ENCODE measurements at regions of chr16 and their contacts with region 1.

Region 1: GRCh38 chr16:86252596-86252995 is 257.7 kb upstream of the FOXF1 start:
- DNase-seq: no peak
- H3K4me3 ChIP-seq: no peak overlapping the region
- H3K27ac ChIP-seq: no peak overlapping the region
- H3K4me1 ChIP-seq: no peaks in the 10 kb centered on the region
- H3K27me3 ChIP-seq: peaks cover 45% of the 10 kb centered on the region
- CTCF ChIP-seq: peak; percentile 30; the same call in 1 of the 2 replicates

Region 2: GRCh38 chr16:85898521-85899442 is 353.8 kb before region 1 on chr16 and contains the start of gene IRF8:
- CTCF ChIA-PET with region 1: interaction called, 13 read pairs
- POLR2A ChIA-PET with region 1: no interaction called
- intact Hi-C with region 1: no loop called
- DNase-seq: no peak
- H3K4me3 ChIP-seq: no peak within 1 kb of the TSS
- H3K27ac ChIP-seq: no peak within 1 kb of the TSS
- H3K4me1 ChIP-seq: no peaks in the 10 kb centered on the region
- H3K27me3 ChIP-seq: peaks cover 92% of the 10 kb centered on the region
- CTCF ChIP-seq: no peak
- total RNA-seq, gene IRF8: not detected in 2 replicates

Region 3: GRCh38 chr16:86027366-86028126 is 225.1 kb before region 1 on chr16:
- CTCF ChIA-PET with region 1: interaction called, 11 read pairs
- POLR2A ChIA-PET with region 1: no interaction called
- intact Hi-C with region 1: no loop called
- DNase-seq: no peak
- H3K4me3 ChIP-seq: no peak overlapping the region
- H3K27ac ChIP-seq: no peak overlapping the region
- H3K4me1 ChIP-seq: no peaks in the 10 kb centered on the region
- H3K27me3 ChIP-seq: peaks cover 69% of the 10 kb centered on the region
- CTCF ChIP-seq: no peak

Region 4: DNA sequence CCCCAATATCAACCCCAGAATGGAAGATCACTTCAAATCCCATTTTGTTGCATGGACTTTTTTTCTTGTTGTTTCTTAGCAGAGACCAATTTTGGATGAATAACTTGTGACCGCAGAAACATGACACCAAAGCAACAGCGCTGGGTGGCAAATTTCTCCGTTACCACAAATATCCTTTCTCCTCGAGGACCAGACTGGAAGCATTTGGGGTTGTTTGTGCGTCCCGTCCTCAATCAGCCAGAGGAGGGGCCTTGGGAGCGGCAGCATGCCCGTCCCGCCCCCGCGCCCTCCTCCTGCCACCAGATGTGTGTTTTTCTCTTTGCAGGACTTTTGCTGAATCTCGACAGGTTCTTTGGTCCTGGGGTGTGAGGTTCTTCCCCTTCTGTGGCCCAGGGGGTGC is 24.8 kb before region 1 on chr16:
- CTCF ChIA-PET with region 1: no interaction called
- POLR2A ChIA-PET with region 1: no interaction called
- intact Hi-C with region 1: no loop called
- DNase-seq: no peak
- H3K4me3 ChIP-seq: no peak overlapping the region
- H3K27ac ChIP-seq: no peak overlapping the region
- H3K4me1 ChIP-seq: no peaks in the 10 kb centered on the region
- H3K27me3 ChIP-seq: peaks cover 68% of the 10 kb centered on the region
- CTCF ChIP-seq: no peak